ENCODE measurements at regions of chr2 and their contacts with region 1.

Region 1: GRCh38 chr2:219294356-219295351 is 14.5 kb downstream of the PTPRN start:
- DNase-seq: peak; percentile 83 to 92 (median 88)
- H3K4me3 ChIP-seq: peak overlapping the region; percentile 51
- H3K4me3 Mint-ChIP-seq: peak overlapping the region; percentile 54 to 81 (median 75)
- H3K27ac ChIP-seq: peak overlapping the region; percentile 55
- H3K27ac Mint-ChIP-seq: peak overlapping the region in 7 of 8 donors; percentile 29 to 96 (median 86)
- H3K4me1 ChIP-seq: peaks cover 22% of the 10 kb centered on the region
- H3K4me1 Mint-ChIP-seq: peaks cover 10 to 21% (median 16%) of the 10 kb centered on the region in 3 donors
- H3K27me3 ChIP-seq: peaks cover 4% of the 10 kb centered on the region
- H3K27me3 Mint-ChIP-seq: peaks cover 5 to 6% of the 10 kb centered on the region in 2 donors

Region 2: GRCh38 chr2:219057709-219058540 is 236.7 kb before region 1 on chr2:
- CTCF ChIA-PET with region 1: interaction called, 26 read pairs
- POLR2A ChIA-PET with region 1: no interaction called
- DNase-seq: peak; percentile 66 to 81 (median 68)
- H3K4me3 ChIP-seq: no peak overlapping the region
- H3K4me3 Mint-ChIP-seq: peak overlapping the region; percentile 11 to 84 (median 65)
- H3K27ac ChIP-seq: no peak overlapping the region
- H3K27ac Mint-ChIP-seq: peak overlapping the region in 3 of 8 donors; percentile 47 to 70 (median 55)
- H3K4me1 ChIP-seq: peaks cover 21% of the 10 kb centered on the region
- H3K4me1 Mint-ChIP-seq: peaks cover 12 to 30% (median 23%) of the 10 kb centered on the region in 3 donors
- H3K27me3 ChIP-seq: peaks cover 40% of the 10 kb centered on the region
- H3K27me3 Mint-ChIP-seq: peaks cover 56 to 67% of the 10 kb centered on the region in 2 donors

Region 3: DNA sequence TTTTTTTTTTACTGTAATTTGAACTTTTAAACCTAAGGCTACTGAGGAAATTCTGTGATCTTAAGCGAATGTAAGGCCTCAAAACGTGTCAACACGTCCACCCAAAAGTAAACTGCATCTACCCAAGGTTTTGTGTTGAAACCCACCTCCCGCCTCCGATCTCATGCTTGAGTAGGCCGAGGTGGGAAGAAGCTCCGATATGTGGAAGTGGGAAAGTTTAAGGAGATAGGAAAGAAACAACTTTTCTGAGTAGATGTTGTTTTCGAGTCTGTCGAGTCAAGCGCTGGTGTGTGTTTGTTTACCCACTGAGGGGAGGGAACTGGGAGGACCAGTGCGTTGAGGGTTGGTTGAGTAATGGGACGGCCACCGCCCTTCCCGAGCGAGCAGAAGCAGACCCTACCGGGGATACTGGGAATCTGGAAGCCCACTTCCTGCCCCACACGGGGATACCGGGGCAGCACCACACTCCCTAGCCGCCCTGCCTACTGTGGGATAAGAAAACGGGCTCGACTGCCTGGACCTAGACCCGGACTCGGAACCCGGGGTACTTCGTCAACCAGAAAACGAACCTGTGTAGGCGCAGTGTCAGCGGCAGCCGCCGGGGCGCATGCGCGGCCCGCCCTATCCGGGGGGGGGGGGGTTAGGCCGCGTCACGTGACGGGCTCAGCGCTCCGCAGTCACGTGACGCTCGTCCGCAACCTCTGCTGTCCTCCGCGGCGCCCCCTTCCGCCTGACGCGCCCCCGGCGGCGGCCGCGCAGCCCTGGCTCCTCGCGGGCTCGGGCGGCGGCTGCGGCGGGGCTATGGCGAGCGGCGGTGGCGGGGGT is 116.9 kb before region 1 on chr2 and contains the start of gene RETREG2:
- CTCF ChIA-PET with region 1: interaction called, 74 read pairs
- POLR2A ChIA-PET with region 1: interaction called, 10 read pairs
- DNase-seq: peak; percentile 73 to 90 (median 85)
- H3K4me3 ChIP-seq: peak within 1 kb of the TSS; percentile 64
- H3K4me3 Mint-ChIP-seq: peak within 1 kb of the TSS; percentile 94 to 98 (median 96)
- H3K27ac ChIP-seq: peak within 1 kb of the TSS; percentile 85
- H3K27ac Mint-ChIP-seq: peak within 1 kb of the TSS; percentile 95 to 100 (median 99)
- H3K4me1 ChIP-seq: peaks cover 54% of the 10 kb centered on the region
- H3K4me1 Mint-ChIP-seq: peaks cover 55 to 79% (median 75%) of the 10 kb centered on the region in 3 donors
- H3K27me3 ChIP-seq: no peaks in the 10 kb centered on the region
- H3K27me3 Mint-ChIP-seq: no peaks in the 10 kb centered on the region
- total RNA-seq, gene RETREG2: 67.6 to 76.1 TPM

Region 4: DNA sequence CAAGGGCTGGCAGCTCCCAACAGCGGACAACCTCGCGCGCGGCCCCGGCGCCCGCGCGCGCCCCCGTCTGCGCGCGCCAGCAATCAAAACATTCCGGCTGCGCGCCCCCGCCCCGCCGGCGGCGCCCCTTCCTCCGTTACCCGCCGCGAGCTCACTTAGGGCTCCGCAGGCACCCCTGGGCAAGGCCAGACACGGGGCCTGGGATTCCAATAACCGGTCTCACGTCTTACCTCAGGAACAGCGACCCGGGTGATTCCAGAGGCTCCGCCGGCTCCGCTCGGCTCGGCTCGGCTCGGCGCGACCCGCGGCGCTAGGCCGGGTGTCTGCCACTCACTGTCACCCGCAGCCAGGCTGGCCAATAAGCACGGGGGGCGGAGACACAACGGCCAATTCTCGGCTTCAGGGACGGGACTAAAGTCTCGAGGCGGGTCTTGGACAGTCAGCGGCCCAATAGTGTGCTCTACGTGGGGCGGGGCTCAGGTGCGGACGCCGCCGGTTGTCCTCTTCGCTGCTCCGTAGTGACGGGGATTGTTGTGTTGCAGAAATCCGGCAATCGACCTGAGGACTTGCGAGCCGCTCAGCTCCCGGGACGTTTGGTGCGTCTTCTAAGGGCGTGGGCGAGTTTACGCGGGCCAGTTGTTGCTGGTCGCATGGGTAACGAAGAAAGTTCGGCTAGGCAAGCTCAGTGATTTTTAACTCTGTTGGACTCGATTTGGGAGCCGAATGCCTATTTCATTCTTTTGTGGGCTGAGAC is 65.2 kb before region 1 on chr2 and contains the starts of genes ANKZF1 and ATG9A:
- CTCF ChIA-PET with region 1: interaction called, 51 read pairs
- POLR2A ChIA-PET with region 1: interaction called, 16 read pairs
- DNase-seq: peak; percentile 96 to 99 (median 98)
- H3K4me3 ChIP-seq: peak within 1 kb of the TSS; percentile 93
- H3K4me3 Mint-ChIP-seq: peak within 1 kb of the TSS; percentile 92 to 100 (median 98)
- H3K27ac ChIP-seq: peak within 1 kb of the TSS; percentile 96
- H3K27ac Mint-ChIP-seq: peak within 1 kb of the TSS; percentile 94 to 100 (median 98)
- H3K4me1 ChIP-seq: peaks cover 44% of the 10 kb centered on the region
- H3K4me1 Mint-ChIP-seq: peaks cover 42 to 79% (median 54%) of the 10 kb centered on the region in 3 donors
- H3K27me3 ChIP-seq: no peaks in the 10 kb centered on the region
- H3K27me3 Mint-ChIP-seq: no peaks in the 10 kb centered on the region
- total RNA-seq, gene ANKZF1: 72.4 to 76.0 TPM
- total RNA-seq, gene ATG9A: 46.1 to 52.9 TPM

Region 5: DNA sequence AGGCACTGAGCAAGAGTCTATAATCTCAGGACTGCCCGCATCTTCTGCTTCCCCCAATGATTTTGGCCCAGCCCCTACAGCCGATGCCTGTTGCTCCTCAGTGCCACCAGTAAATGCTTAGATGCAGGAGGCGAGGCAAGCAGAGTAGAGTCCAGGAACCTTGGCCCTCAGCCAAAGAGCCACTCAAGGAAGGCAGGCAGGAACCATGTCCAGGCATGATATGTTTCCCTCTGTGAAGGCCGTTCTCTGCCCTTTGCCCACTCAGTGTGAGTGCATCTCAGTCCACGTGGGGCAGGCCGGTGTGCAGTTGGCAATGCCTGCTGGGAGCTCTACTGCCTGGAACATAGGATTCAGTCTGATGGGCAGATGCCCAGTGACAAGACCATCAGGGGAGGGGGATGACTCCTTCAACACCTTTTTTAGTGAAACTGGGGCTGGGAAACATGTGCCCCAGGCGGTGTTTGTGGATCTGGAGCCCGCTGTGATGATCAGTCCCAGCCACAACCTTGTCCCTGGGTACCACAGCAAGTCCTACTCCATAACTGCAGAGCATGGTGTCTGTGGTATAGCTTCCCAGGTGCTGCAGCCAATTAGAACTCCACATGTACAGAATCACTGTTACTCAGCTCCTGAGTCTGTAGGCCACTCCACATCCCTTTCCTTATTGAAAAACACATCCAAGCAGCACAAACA is 25.1 kb before region 1 on chr2:
- CTCF ChIA-PET with region 1: interaction called, 258 read pairs
- POLR2A ChIA-PET with region 1: no interaction called
- DNase-seq: no peak
- H3K4me3 ChIP-seq: no peak overlapping the region
- H3K4me3 Mint-ChIP-seq: no peak overlapping the region
- H3K27ac ChIP-seq: no peak overlapping the region
- H3K27ac Mint-ChIP-seq: peak overlapping the region in 1 of 8 donors; percentile 25
- H3K4me1 ChIP-seq: no peaks in the 10 kb centered on the region
- H3K4me1 Mint-ChIP-seq: no peaks in the 10 kb centered on the region
- H3K27me3 ChIP-seq: no peaks in the 10 kb centered on the region
- H3K27me3 Mint-ChIP-seq: no peaks in the 10 kb centered on the region

Region 6: GRCh38 chr2:219314804-219315468 is 20.3 kb after region 1 on chr2:
- CTCF ChIA-PET with region 1: interaction called, 14 read pairs
- POLR2A ChIA-PET with region 1: no interaction called
- DNase-seq: no peak
- H3K4me3 ChIP-seq: no peak overlapping the region
- H3K4me3 Mint-ChIP-seq: no peak overlapping the region
- H3K27ac ChIP-seq: no peak overlapping the region
- H3K27ac Mint-ChIP-seq: no peak overlapping the region
- H3K4me1 ChIP-seq: no peaks in the 10 kb centered on the region
- H3K4me1 Mint-ChIP-seq: no peaks in the 10 kb centered on the region
- H3K27me3 ChIP-seq: peaks cover 3% of the 10 kb centered on the region
- H3K27me3 Mint-ChIP-seq: peaks cover 14 to 30% of the 10 kb centered on the region in 2 donors

Measured in CD8-positive, alpha-beta memory T cell (primary cell).